Posterior vena cava (tissue), 2 donors: ENCODE measurements at regions of chr6 and their contacts with region 1.

Region 1: DNA sequence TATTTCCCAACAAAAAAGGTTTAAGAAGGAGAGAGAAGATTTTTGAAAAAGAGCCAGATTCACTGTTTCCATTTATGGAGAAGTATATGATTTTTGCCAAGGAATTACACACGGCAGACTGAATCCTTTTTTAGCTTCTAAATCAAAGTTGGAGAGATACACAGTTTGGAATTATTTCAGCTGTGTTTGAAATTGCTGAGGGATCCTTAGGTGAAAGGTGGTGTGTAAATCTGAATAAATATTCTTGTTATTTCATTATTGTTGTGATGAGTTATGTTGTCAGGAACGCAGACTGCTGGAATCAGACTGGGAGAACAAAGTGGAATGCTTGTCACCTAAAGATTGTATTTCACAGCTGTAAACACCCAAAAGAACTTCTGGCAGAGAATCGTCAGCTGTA is 168.5 kb upstream of the AKIRIN2 start:
- DNase-seq: no peak

Region 2: DNA sequence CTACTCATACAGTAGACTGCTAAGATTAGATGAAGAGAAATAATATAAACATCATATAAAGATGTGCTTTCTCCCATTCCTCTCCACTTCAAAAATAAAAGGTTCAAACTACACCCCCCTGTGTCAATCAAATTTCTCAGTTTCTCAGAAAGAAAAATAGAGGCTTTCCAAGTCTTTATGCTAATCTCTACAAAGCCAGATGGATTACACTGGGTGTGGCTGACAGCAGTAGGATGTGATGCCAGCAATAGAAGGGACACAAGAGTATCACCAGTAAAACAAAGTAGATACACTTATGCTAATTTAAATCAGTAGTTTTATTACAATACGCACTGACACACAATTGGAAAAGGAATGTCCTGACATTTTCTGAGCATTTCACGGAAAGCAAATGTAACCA is 739.4 kb after region 1 on chr6:
- intact Hi-C with region 1: loop called in 1 of 2 experiments (anchors 5 kb)
- DNase-seq: no peak